ENCODE measurements at regions of chr11 and their contacts with region 1.

Region 1: DNA sequence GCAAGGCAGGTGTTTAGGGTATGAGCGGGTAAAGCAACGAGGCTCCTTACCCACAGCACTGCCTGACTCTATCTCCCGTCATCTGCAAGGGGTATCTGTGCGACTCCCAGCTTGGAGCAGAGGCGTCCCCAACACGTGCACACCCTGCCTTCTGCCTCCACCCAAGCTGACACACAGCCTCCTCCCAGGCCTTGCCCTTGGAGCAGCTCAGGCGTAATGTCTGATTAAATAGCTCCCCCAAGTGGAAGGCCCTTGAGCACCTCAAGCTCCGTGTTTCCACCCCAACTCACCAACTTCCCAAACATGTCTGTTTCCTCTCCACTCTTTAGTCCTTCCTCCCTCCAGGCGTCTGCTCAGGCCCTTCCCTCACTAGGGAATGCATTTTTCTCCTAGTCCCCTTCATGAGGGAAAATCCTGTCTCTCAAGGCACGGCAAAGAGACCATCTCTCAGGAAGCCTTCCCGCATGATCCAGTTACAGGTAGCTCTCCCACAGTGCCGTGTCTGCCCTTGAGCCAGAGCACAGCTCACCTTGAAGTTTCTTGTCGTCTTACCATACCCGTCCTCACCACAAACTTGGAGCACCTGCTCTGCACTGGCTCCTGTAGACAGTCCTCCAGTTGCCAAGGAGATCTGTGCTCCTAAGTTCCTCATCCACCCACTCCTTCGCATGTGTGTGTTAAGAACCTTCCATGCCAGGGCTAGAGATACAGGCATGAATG is 15.8 kb downstream of the CYB5R2 start:
- DNase-seq: peak; percentile 72
- ATAC-seq: peak; percentile 98
- H3K4me3 Mint-ChIP-seq: no peak overlapping the region
- H3K27ac Mint-ChIP-seq: peak overlapping the region; percentile 69
- H3K4me1 Mint-ChIP-seq: peaks cover 6% of the 10 kb centered on the region
- H3K27me3 Mint-ChIP-seq: 0 out of 2 replicates have a peak, but pooled peaks cover under 1% of the 10 kb centered on the region
- CTCF ChIP-seq: peak; percentile 37

Region 2: GRCh38 chr11:7353100-7353499 is 304.4 kb before region 1 on chr11:
- CTCF ChIA-PET with region 1: interaction called, 33 read pairs
- POLR2A ChIA-PET with region 1: no interaction called
- DNase-seq: peak; percentile 41
- ATAC-seq: peak; percentile 96
- H3K4me3 Mint-ChIP-seq: no peak overlapping the region
- H3K27ac Mint-ChIP-seq: no peak overlapping the region
- H3K4me1 Mint-ChIP-seq: peaks cover 14% of the 10 kb centered on the region; the same call in 1 of the 2 replicates
- H3K27me3 Mint-ChIP-seq: no peaks in the 10 kb centered on the region; the same call in 1 of the 2 replicates
- CTCF ChIP-seq: 0 out of 2 replicates have a peak, but pooled peaks have one; percentile 37

Region 3: GRCh38 chr11:7427733-7428132 is 229.7 kb before region 1 on chr11:
- CTCF ChIA-PET with region 1: no interaction called
- POLR2A ChIA-PET with region 1: no interaction called
- DNase-seq: no peak
- ATAC-seq: no peak
- H3K4me3 Mint-ChIP-seq: no peak overlapping the region
- H3K27ac Mint-ChIP-seq: no peak overlapping the region
- H3K4me1 Mint-ChIP-seq: peaks cover 11% of the 10 kb centered on the region; the same call in 1 of the 2 replicates
- H3K27me3 Mint-ChIP-seq: no peaks in the 10 kb centered on the region
- CTCF ChIP-seq: no peak

Region 4: DNA sequence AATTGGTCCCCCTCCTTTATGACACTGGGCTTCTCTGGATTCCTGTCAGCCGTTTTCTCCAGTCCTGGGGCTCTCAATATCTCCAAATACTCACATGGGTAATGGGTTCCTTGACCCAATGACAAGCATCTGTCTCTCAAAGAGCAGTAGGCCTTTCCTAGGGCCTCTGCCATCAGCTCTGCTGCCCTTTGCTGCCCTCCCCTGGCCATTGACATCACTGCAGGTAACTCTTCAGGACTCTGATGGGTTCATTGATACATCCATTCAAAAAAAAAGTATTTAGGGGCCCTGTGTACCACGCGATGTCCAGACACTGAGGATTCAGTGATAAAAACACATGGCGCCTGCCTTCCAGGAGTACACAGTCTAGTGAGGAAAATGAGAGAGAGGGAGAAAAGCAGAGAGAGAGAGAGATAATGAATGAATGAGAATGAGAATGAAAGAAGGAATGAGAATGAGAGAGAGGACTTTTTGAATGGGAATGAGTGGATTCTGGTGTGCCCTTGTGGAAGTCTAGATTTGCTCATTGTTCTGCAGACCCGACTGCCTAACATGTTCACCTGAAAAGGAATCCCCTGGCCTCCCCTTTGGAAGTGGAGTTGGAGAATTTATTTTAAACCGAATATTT is 214.8 kb before region 1 on chr11:
- CTCF ChIA-PET with region 1: interaction called, 12 read pairs
- POLR2A ChIA-PET with region 1: no interaction called
- DNase-seq: peak; percentile 89
- ATAC-seq: peak; percentile 93
- H3K4me3 Mint-ChIP-seq: no peak overlapping the region
- H3K27ac Mint-ChIP-seq: no peak overlapping the region
- H3K4me1 Mint-ChIP-seq: peaks cover 3% of the 10 kb centered on the region; the same call in 1 of the 2 replicates
- H3K27me3 Mint-ChIP-seq: peaks cover 3% of the 10 kb centered on the region; the same call in 1 of the 2 replicates
- CTCF ChIP-seq: peak; percentile 87

Region 5: DNA sequence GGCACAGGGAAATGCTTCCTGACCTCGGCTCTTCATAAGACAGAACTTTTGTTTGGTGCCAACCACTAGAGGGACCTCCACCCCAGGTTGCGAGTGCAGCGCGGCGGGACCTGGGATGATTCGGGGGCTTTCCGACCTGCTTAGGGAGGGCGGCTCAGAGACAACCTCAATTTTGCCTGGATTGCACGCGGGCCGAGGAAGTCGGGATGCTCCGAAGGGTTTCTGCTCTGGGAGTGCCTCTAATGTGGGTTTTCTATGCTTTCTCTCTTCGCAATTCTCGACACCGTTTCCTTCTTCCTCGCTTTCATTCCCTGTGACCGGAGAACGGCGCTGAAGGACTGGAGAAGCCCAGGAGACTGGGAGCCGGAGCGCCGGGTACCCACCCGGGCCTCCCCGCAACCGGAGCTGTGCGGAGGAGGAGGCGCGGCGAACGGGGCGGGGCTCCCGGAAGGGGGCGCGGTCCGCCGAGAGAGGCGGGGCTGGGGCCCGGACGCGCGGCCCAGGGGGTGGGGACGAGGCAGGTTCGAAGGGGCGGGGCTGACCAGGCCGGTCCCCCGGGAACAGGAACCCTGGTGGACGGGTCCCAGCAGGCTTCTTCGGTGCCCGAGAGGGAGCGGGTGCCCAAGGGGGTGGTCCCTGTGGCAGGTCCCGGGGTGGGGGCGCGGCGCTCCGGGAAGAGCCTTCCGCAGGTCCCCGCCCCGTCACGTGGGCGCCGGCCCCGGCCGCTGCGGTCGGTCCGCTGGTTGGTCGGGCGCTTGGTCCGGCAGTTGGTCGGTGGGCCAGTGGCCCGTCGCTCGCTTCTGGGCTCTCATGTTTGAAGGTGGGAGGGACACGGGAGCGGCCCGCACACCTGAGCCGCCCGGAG is 144.0 kb before region 1 on chr11 and contains the start of gene PPFIBP2:
- CTCF ChIA-PET with region 1: interaction called, 46 read pairs
- POLR2A ChIA-PET with region 1: no interaction called
- DNase-seq: peak; percentile 83
- ATAC-seq: peak; percentile 83
- H3K4me3 Mint-ChIP-seq: peak within 1 kb of the TSS; percentile 83
- H3K27ac Mint-ChIP-seq: peak within 1 kb of the TSS; percentile 63
- H3K4me1 Mint-ChIP-seq: peaks cover 41% of the 10 kb centered on the region
- H3K27me3 Mint-ChIP-seq: peaks cover 24% of the 10 kb centered on the region
- CTCF ChIP-seq: no peak
- total RNA-seq, gene PPFIBP2: 12.5 to 21.4 TPM (median 12.9 TPM) in 3 replicates

Region 6: GRCh38 chr11:7548659-7549274 is 108.7 kb before region 1 on chr11:
- CTCF ChIA-PET with region 1: interaction called, 29 read pairs
- POLR2A ChIA-PET with region 1: interaction called, 3 read pairs
- DNase-seq: peak; percentile 84
- ATAC-seq: peak; percentile 98
- H3K4me3 Mint-ChIP-seq: no peak overlapping the region
- H3K27ac Mint-ChIP-seq: 0 out of 2 replicates have a peak overlapping the region, but pooled peaks have one; percentile 14
- H3K4me1 Mint-ChIP-seq: peaks cover 37% of the 10 kb centered on the region
- H3K27me3 Mint-ChIP-seq: no peaks in the 10 kb centered on the region
- CTCF ChIP-seq: peak; percentile 45; the same call in 1 of the 2 replicates

Region 7: DNA sequence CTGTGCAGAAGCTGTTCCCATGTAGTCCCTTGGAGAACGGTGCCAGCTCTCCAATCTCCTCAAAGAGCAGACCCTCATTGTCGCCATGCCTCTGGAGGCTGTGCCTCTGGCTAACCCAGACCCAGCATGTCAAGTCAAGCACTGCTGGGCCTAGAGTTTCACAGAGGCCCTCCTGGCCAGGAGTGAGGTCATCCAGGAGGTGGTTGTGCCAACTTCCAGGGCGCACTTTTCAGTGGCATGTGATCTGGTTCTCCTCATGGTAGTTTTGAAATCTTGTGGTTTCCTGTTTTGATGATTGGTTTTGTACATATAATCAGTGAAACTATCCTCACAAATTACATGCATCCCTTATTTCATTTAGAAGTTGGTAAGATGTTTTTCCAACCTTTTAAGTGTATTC is 64.8 kb before region 1 on chr11:
- CTCF ChIA-PET with region 1: interaction called, 11 read pairs
- POLR2A ChIA-PET with region 1: no interaction called
- DNase-seq: no peak
- ATAC-seq: no peak
- H3K4me3 Mint-ChIP-seq: no peak overlapping the region
- H3K27ac Mint-ChIP-seq: peak overlapping the region; percentile 19; the same call in 1 of the 2 replicates
- H3K4me1 Mint-ChIP-seq: peaks cover 55% of the 10 kb centered on the region
- H3K27me3 Mint-ChIP-seq: no peaks in the 10 kb centered on the region
- CTCF ChIP-seq: no peak

Region 8: DNA sequence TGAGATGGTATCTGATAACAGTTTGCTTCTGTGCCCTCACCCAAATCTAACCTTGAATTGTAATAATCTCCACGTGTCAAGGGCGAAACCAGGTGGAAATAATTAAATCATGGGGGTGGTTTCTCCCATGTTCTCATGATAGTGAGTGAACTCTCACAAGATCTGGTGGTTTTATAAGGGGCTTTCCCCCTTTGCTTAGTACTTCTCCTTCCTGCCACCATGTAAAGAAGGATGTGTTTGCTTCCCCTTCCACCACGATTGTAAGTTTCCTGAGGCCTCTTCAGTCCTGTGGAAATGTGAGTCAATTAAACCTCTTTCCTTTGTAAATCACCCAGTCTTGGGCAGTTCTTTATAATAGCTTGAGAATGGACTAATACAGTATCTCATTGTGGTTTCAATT is 57.3 kb after region 1 on chr11:
- CTCF ChIA-PET with region 1: no interaction called
- POLR2A ChIA-PET with region 1: no interaction called
- DNase-seq: no peak
- ATAC-seq: no peak
- H3K4me3 Mint-ChIP-seq: no peak overlapping the region
- H3K27ac Mint-ChIP-seq: no peak overlapping the region
- H3K4me1 Mint-ChIP-seq: no peaks in the 10 kb centered on the region
- H3K27me3 Mint-ChIP-seq: peaks cover 17% of the 10 kb centered on the region
- CTCF ChIP-seq: no peak

Measured in WTC11 (cell line).